ENCODE measurements at regions of chr7 and their contacts with region 1.

Region 1: DNA sequence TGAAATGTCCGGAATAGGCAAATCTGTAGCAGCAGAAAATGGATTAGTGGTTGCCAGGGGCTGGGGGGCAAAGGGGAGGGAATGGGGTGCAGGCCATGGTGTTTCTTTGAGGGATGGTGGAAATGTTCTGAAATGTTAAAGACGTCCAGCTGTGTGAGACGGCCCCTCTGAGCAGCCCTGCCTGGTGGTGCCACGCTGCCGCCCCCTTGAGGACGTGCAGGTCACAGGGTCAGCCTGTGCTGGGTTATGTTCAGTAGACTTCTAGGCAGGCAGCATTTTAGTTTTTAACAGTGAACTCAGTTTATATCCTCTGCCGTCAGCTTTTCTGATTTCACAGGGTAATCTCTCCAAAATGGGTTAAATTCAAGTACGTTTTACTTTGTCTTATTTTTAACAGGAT is 9.4 kb downstream of the NUB1 start:
- DNase-seq: no peak
- ATAC-seq: no peak
- H3K4me3 ChIP-seq: no peak overlapping the region
- H3K27ac ChIP-seq: peak overlapping the region in 1 of 2 donors; percentile 88
- H3K4me1 ChIP-seq: peaks cover 0 to 34% of the 10 kb centered on the region in 2 donors
- H3K27me3 ChIP-seq: no peaks in the 10 kb centered on the region
- CTCF ChIP-seq: no peak

Region 2: DNA sequence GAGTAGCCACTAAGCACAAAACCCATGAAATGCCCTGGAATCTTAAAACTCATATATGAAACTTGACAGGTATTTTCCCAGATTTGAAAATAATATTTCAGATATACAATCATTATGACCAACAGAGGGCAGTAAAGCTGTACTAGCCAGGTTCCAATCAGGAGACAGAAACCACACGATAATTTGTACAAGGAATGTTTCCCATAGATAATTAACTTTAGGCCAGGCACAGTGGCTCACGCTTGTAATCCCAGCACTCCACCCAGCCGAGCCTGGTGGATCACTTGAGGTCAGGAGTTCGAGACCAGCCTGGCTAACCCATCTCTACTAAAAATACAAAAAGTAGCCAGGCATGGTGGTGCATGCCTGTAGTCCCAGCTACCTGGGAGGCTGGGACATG is 40.4 kb before region 1 on chr7:
- intact Hi-C with region 1: loop called in 1 of 2 experiments (anchors 5 kb)
- DNase-seq: no peak
- ATAC-seq: peak; percentile 19
- H3K4me3 ChIP-seq: no peak overlapping the region
- H3K27ac ChIP-seq: no peak overlapping the region
- H3K4me1 ChIP-seq: peaks cover 4 to 6% of the 10 kb centered on the region in 2 donors
- H3K27me3 ChIP-seq: peaks cover 0 to 4% of the 10 kb centered on the region in 2 donors
- CTCF ChIP-seq: no peak

Measured in left lung (tissue), 14 donors.